Endothelial cell of umbilical vein (primary cell): ENCODE measurements at regions of chr11 and their contacts with region 1.

Region 1: GRCh38 chr11:30917859-30918478 is 331.8 kb upstream of the MPPED2 start:
- DNase-seq: peak; percentile 60
- H3K4me3 ChIP-seq: no peak overlapping the region
- H3K27ac ChIP-seq: no peak overlapping the region
- H3K4me1 ChIP-seq: no peaks in the 10 kb centered on the region
- H3K27me3 ChIP-seq: peaks cover 0 to 6% of the 10 kb centered on the region in 2 experiments
- CTCF ChIP-seq: peak; percentile 37 to 40
- POLR2A ChIP-seq: no peak

Region 2: GRCh38 chr11:30346068-30346688 is 571.8 kb before region 1 on chr11:
- CTCF ChIA-PET with region 1: interaction called, 14 read pairs
- POLR2A ChIA-PET with region 1: no interaction called
- dilution Hi-C with region 1: no loop called
- intact Hi-C with region 1: loop called (anchors 1 kb)
- DNase-seq: peak; percentile 54
- H3K4me3 ChIP-seq: no peak overlapping the region
- H3K27ac ChIP-seq: no peak overlapping the region
- H3K4me1 ChIP-seq: no peaks in the 10 kb centered on the region
- H3K27me3 ChIP-seq: no peaks in the 10 kb centered on the region
- CTCF ChIP-seq: peak; percentile 20 to 35
- POLR2A ChIP-seq: no peak

Region 3: DNA sequence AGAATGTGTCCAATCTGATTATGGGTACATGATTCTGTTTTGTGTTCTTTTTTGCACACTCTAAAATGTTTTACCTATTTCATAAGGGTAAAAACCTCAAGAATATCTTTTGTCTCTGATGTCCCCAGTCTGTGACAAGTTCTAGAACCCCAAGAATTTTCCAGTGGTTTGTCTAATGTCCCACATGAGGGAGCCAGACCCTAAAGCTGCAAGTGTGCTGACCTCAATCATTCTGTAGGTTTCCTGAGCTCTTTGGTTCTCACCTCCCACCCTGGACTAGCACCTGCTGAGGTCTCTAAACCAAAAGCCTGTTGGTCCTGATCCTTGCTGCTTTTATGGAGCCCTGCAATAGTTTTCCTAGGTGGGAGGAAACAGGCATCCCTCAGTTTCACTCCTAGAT is 182.0 kb before region 1 on chr11:
- CTCF ChIA-PET with region 1: interaction called, 6 read pairs
- POLR2A ChIA-PET with region 1: no interaction called
- dilution Hi-C with region 1: no loop called
- intact Hi-C with region 1: loop called (anchors 5 kb)
- DNase-seq: no peak
- H3K4me3 ChIP-seq: no peak overlapping the region
- H3K27ac ChIP-seq: no peak overlapping the region
- H3K4me1 ChIP-seq: no peaks in the 10 kb centered on the region
- H3K27me3 ChIP-seq: no peaks in the 10 kb centered on the region
- CTCF ChIP-seq: no peak
- POLR2A ChIP-seq: no peak

Region 4: GRCh38 chr11:30855383-30856006 is 62.5 kb before region 1 on chr11:
- CTCF ChIA-PET with region 1: no interaction called
- POLR2A ChIA-PET with region 1: no interaction called
- dilution Hi-C with region 1: no loop called
- intact Hi-C with region 1: loop called (anchors 1 kb)
- DNase-seq: peak; percentile 9
- H3K4me3 ChIP-seq: no peak overlapping the region
- H3K27ac ChIP-seq: no peak overlapping the region
- H3K4me1 ChIP-seq: no peaks in the 10 kb centered on the region
- H3K27me3 ChIP-seq: no peaks in the 10 kb centered on the region
- CTCF ChIP-seq: peak; percentile 3 to 8
- POLR2A ChIP-seq: no peak